ENCODE measurements at regions of chr3 and their contacts with region 1.

Region 1: DNA sequence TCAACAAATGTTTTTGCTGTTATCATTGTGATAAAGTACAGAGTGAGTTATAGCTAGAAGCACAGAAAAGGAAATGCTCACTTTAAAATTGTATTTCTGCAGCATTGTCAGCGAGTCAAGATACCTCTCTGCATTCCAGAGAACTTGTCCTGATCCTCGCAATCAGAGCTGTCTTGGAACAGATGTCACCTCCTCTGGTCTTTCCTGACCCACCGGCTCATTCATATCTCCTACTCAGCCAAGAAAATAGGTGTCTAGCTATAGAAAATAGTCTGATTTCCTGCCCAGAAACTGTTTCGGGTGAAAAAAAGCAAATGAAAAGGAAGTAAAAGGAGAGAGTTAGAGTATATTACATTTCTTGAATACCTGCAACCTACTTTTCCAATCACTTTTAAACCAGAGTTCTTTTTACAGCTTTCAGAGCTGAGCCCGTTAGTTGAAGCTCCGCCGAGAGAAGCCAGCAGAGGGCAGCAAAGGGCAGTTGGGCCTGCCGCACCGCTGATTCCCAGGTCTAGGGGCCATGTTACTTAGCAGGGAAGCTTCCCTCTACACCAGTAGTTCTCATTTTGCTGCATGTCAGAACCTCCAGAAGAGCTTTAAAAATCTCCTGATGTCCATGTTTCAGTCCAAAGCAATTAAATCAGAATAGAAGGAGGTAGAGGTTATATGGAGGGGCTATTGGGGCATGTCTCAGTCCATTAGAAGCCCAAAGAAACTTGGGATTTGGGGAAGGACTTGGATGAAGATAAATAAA is 185.7 kb upstream of the THRB start:
- DNase-seq: peak; percentile 25
- H3K4me3 ChIP-seq: no peak overlapping the region
- H3K27ac ChIP-seq: no peak overlapping the region
- H3K4me1 ChIP-seq: peaks cover 28% of the 10 kb centered on the region
- H3K27me3 ChIP-seq: no peaks in the 10 kb centered on the region
- CTCF ChIP-seq: peak; percentile 76 to 78

Region 2: DNA sequence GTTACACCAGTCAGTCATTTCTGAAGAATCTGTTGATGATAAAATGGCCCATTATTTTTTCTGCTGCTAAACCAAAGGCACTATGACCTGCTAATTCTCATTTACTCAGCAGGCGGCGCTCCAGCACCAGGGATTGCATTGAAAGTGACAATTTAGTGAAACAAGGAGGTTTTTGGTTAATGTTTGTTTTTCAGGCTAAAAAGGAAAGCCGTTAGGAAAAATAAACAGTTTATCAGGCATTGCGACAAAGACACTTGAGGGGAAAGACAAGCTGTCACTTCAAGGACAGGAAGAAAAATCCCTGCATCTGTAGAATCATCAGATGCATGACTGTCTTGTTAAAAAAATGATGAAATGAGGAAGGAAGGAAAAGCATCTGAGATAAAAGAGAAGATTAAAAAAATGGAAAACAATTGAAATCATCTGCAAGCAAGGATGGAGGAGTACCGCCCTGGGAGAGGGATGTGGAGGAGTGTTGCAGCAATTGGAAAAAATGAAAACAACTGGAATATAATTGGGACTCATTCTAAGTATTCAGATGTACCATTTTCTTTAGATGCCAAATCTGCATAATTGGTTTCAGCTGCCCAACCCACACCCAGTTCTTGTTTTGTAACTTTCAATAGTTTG is 681.3 kb before region 1 on chr3:
- CTCF ChIA-PET with region 1: no interaction called
- dilution Hi-C with region 1: no loop called
- in situ Hi-C with region 1: loop called (anchors 25 kb)
- intact Hi-C with region 1: loop called (anchors 1 kb)
- DNase-seq: peak; percentile 33
- H3K4me3 ChIP-seq: no peak overlapping the region
- H3K27ac ChIP-seq: no peak overlapping the region
- H3K4me1 ChIP-seq: peaks cover under 1% of the 10 kb centered on the region
- H3K27me3 ChIP-seq: no peaks in the 10 kb centered on the region
- CTCF ChIP-seq: peak; percentile 96 to 100

Region 3: DNA sequence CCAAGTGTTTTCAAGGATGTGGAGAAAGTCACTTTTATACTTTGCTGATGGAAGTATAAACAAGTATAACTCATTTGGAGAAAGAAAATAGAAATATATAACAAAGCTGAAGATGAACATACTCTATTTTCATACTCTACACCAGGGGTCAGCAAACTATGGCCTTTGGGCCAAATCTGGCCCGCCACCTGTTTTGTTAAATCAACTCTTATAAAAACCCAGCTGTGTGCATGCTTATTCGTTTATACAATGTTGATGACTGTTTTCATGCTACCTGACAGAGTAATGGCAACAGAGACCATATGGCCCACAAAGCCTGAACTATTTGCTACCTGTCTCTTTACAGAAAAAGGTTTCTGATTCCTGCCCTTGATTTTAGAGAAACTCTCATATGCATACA is 611.3 kb before region 1 on chr3:
- CTCF ChIA-PET with region 1: no interaction called
- dilution Hi-C with region 1: no loop called
- in situ Hi-C with region 1: no loop called
- intact Hi-C with region 1: loop called (anchors 10 kb)
- DNase-seq: no peak
- H3K4me3 ChIP-seq: no peak overlapping the region
- H3K27ac ChIP-seq: no peak overlapping the region
- H3K4me1 ChIP-seq: no peaks in the 10 kb centered on the region
- H3K27me3 ChIP-seq: no peaks in the 10 kb centered on the region
- CTCF ChIP-seq: peak in 1 of 2 donors; percentile 30

Region 4: DNA sequence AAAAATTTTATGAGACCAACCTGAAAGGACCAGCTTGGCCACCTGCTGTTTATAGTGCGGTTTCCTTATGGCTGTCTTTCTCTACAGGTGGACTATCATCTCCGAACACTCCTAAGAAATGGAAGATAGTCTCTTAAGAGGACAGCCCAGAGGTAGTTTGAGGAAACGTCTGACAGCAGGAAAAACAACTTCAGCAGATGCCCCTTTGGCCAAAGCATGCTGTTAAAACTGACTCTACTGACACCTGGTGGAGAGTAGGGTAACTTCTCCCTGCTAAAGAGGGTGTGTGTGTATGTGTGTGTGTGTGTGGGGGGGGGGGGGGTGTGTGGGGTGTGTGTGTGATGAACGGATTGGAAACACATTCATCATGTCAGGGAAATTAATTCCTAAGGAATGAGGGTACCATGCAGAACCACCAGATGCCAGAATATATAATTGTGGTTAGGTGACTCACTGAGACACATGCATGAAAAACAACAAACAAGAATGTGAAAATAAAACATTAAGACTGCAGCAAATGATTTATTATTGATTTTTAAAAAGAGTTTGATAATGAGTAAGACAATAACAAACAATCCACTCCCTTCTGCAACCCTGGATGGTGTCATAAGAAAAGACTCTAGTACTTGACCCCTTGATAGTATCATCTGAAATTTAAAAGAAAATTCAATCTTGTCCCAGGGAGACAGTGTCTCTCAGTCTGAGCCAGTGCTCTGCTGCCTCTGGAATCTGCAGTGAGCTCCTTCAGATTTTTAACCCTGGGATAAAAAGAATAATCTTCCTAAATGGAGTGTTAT is 442.2 kb before region 1 on chr3:
- CTCF ChIA-PET with region 1: no interaction called
- dilution Hi-C with region 1: no loop called
- in situ Hi-C with region 1: no loop called
- intact Hi-C with region 1: loop called (anchors 1 kb)
- DNase-seq: peak; percentile 89
- H3K4me3 ChIP-seq: no peak overlapping the region
- H3K27ac ChIP-seq: peak overlapping the region; percentile 38
- H3K4me1 ChIP-seq: peaks cover 45% of the 10 kb centered on the region
- H3K27me3 ChIP-seq: no peaks in the 10 kb centered on the region
- CTCF ChIP-seq: peak; percentile 62 to 77

Region 5: GRCh38 chr3:24494618-24495325 is 185.6 kb before region 1 on chr3 and contains the start of gene THRB:
- CTCF ChIA-PET with region 1: no interaction called
- dilution Hi-C with region 1: no loop called
- in situ Hi-C with region 1: no loop called
- intact Hi-C with region 1: loop called (anchors 2 kb)
- DNase-seq: peak; percentile 77
- H3K4me3 ChIP-seq: peak within 1 kb of the TSS; percentile 79 to 97 (median 91)
- H3K27ac ChIP-seq: peak within 1 kb of the TSS; percentile 78
- H3K4me1 ChIP-seq: peaks cover 18% of the 10 kb centered on the region
- H3K27me3 ChIP-seq: no peaks in the 10 kb centered on the region
- CTCF ChIP-seq: peak in 1 of 2 donors; percentile 20
- total RNA-seq, gene THRB: 13.1 to 16.3 TPM

Region 6: DNA sequence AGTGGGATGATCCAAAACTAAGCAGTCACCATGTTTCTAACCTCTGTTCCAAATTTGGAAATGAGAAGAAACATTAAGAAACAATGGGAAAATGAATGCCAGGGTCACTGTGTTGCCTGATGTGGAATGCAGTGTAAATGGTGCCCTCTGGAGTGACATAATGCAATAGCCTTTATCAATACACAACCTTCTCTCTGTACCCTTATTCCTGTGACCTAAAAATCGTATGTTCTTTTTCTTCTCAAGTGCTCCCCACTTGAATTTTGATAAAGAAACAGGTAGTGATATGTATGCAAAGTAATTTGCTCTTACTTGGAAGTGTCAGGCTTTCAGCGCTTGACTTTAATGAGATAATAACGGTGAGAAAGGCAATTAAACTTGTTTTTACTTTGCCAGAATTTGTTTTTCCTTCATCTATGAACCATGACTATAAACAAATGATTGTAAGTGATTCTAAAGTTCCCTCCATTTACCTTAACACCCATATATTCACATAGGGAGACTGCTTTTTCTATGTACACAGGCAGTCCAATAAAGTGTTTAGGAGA is 40.0 kb before region 1 on chr3:
- CTCF ChIA-PET with region 1: no interaction called
- dilution Hi-C with region 1: no loop called
- in situ Hi-C with region 1: no loop called
- intact Hi-C with region 1: loop called (anchors 2 kb)
- DNase-seq: peak; percentile 43
- H3K4me3 ChIP-seq: no peak overlapping the region
- H3K27ac ChIP-seq: no peak overlapping the region
- H3K4me1 ChIP-seq: no peaks in the 10 kb centered on the region
- H3K27me3 ChIP-seq: no peaks in the 10 kb centered on the region
- CTCF ChIP-seq: peak; percentile 68 to 75

Region 7: DNA sequence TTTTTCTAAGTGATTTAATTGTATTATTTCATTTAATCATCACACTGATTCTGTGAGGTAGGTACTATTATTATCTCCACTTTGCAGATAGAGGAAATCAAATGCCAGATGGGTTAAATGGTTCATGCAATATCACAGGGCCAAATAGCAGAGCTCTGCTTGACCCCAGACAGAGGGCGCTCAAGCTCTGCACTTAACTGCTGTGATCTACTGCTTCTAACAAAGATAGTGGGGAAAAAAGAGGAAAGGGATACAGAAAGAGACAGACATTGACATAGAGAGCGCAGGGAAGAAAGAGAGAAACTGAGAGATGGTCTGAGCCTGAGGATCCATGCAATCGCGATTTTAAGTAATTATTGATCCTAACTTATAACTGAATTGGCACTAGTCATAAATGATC is 93.4 kb after region 1 on chr3:
- CTCF ChIA-PET with region 1: no interaction called
- dilution Hi-C with region 1: no loop called
- in situ Hi-C with region 1: no loop called
- intact Hi-C with region 1: loop called (anchors 1 kb)
- DNase-seq: peak; percentile 52
- H3K4me3 ChIP-seq: no peak overlapping the region
- H3K27ac ChIP-seq: no peak overlapping the region
- H3K4me1 ChIP-seq: no peaks in the 10 kb centered on the region
- H3K27me3 ChIP-seq: no peaks in the 10 kb centered on the region
- CTCF ChIP-seq: peak; percentile 88 to 90

Measured in mammary epithelial cell (primary cell).